ENCODE measurements at regions of chr17 and their contacts with region 1.

Region 1: DNA sequence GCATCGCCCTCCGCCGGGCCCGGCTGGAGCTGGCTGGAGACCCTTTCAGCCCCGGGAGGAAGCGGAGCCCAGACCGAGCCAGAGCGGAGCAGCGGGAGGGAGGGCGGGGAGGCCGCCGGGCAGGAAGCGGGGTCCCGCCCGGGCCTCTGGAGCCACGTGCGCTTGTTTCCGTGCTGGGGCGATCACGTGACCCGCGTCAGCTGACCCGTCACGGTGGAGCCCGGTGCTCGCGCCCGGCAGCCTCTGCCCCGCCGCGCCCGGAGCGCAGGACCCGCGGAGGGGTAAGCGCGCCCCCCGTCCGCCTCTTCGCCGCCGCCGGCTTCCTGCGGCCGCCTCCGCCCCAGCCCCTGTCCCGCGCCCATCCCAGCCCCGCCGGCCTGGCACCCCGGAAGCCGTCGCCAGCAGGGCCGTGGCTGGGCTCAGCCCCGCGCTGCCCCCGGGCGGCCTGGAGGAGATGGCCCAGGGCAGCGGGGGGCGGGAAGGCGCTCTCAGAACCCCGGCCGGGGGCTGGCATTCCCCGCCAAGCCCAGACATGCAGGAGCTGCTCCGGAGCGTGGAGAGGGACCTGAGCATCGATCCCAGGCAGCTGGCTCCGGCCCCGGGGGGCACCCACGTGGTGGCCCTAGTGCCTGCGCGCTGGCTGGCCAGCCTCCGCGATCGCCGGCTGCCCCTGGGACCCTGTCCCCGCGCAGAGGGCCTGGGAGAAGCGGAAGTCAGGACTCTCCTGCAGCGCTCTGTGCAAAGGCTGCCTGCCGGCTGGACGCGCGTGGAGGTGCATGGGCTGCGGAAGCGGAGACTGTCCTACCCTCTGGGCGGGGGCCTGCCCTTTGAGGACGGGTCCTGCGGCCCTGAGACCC is at the start of gene WDR81:
- DNase-seq: peak in 1 of 2 experiments; percentile 90
- H3K4me3 ChIP-seq: peak within 1 kb of the TSS; percentile 39 to 78 (median 45)
- H3K27ac ChIP-seq: no peak within 1 kb of the TSS
- H3K4me1 ChIP-seq: peaks cover 0 to 5% (median 3%) of the 10 kb centered on the region in 4 experiments; a peak in 5 of 7 replicates
- H3K27me3 ChIP-seq: 0 out of 7 replicates have a peak, but pooled peaks cover 0 to 2% (median 0%) of the 10 kb centered on the region in 4 experiments
- CTCF ChIP-seq: no peak
- EP300 ChIP-seq: 0 out of 3 replicates have a peak, but pooled peaks of 1 of the 2 experiments have one; percentile 14
- POLR2A ChIP-seq: no peak
- RAD21 ChIP-seq: no peak; a peak in 1 of 4 replicates
- total RNA-seq, gene WDR81: 12.3 and 13.1 TPM in 2 replicates

Region 2: GRCh38 chr17:1752425-1753262 is 27.9 kb after region 1 on chr17:
- CTCF ChIA-PET with region 1: interaction called, 48 read pairs
- POLR2A ChIA-PET with region 1: interaction called, 4 read pairs
- DNase-seq: no peak
- H3K4me3 ChIP-seq: peak overlapping the region in 1 of 4 experiments; percentile 33; a peak in 1 of 8 replicates
- H3K27ac ChIP-seq: no peak overlapping the region
- H3K4me1 ChIP-seq: peaks cover 0 to 16% (median 11%) of the 10 kb centered on the region in 4 experiments; a peak in 6 of 7 replicates
- H3K27me3 ChIP-seq: no peaks in the 10 kb centered on the region
- CTCF ChIP-seq: no peak
- EP300 ChIP-seq: no peak
- POLR2A ChIP-seq: no peak
- RAD21 ChIP-seq: no peak

Region 3: GRCh38 chr17:1764284-1764683 is 39.5 kb after region 1 on chr17:
- CTCF ChIA-PET with region 1: interaction called, 42 read pairs
- POLR2A ChIA-PET with region 1: interaction called, 8 read pairs
- DNase-seq: no peak
- H3K4me3 ChIP-seq: no peak overlapping the region
- H3K27ac ChIP-seq: no peak overlapping the region
- H3K4me1 ChIP-seq: peaks cover 0 to 25% (median 21%) of the 10 kb centered on the region in 4 experiments; a peak in 6 of 7 replicates
- H3K27me3 ChIP-seq: no peaks in the 10 kb centered on the region; a peak in 2 of 7 replicates
- CTCF ChIP-seq: no peak
- EP300 ChIP-seq: no peak
- POLR2A ChIP-seq: no peak
- RAD21 ChIP-seq: no peak

Region 4: DNA sequence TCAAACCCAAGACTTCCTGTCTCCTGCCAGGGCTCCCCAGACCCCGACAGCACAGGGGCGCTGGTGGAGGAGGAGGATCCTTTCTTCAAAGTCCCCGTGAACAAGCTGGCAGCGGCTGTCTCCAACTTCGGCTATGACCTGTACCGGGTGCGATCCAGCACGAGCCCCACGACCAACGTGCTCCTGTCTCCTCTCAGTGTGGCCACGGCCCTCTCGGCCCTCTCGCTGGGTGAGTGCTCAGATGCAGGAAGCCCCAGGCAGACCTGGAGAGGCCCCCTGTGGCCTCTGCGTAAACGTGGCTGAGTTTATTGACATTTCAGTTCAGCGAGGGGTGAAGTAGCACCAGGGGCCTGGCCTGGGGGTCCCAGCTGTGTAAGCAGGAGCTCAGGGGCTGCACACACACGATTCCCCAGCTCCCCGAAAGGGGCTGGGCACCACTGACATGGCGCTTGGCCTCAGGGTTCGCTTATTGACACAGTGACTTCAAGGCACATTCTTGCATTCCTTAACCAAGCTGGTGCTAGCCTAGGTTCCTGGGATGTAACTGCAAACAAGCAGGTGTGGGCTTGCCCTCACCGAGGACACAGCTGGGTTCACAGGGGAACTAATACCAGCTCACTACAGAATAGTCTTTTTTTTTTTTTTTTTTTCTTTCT is 45.2 kb after region 1 on chr17:
- CTCF ChIA-PET with region 1: interaction called, 42 read pairs
- POLR2A ChIA-PET with region 1: interaction called, 7 read pairs
- DNase-seq: no peak
- H3K4me3 ChIP-seq: no peak overlapping the region
- H3K27ac ChIP-seq: no peak overlapping the region
- H3K4me1 ChIP-seq: peaks cover 0 to 10% (median 6%) of the 10 kb centered on the region in 4 experiments; a peak in 5 of 7 replicates
- H3K27me3 ChIP-seq: no peaks in the 10 kb centered on the region
- CTCF ChIP-seq: no peak
- EP300 ChIP-seq: no peak
- POLR2A ChIP-seq: 0 out of 3 replicates have a peak, but pooled peaks of 1 of the 2 experiments have one; percentile 26
- RAD21 ChIP-seq: no peak

Region 5: DNA sequence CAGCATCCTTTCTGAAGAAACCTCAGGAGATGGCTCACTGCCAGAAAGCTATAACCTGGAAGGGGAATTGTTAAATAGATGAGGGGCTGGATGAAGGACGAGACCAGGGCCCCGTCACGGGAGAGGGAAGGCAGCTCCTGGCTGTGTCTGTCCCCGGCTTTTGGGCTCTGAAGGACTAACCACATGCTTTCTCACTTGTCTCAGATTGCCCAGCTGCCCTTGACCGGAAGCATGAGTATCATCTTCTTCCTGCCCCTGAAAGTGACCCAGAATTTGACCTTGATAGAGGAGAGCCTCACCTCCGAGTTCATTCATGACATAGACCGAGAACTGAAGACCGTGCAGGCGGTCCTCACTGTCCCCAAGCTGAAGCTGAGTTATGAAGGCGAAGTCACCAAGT is 51.6 kb after region 1 on chr17:
- CTCF ChIA-PET with region 1: interaction called, 117 read pairs
- POLR2A ChIA-PET with region 1: interaction called, 4 read pairs
- DNase-seq: no peak
- H3K4me3 ChIP-seq: no peak overlapping the region
- H3K27ac ChIP-seq: no peak overlapping the region
- H3K4me1 ChIP-seq: no peaks in the 10 kb centered on the region
- H3K27me3 ChIP-seq: no peaks in the 10 kb centered on the region
- CTCF ChIP-seq: no peak
- EP300 ChIP-seq: no peak
- POLR2A ChIP-seq: no peak
- RAD21 ChIP-seq: no peak

Region 6: DNA sequence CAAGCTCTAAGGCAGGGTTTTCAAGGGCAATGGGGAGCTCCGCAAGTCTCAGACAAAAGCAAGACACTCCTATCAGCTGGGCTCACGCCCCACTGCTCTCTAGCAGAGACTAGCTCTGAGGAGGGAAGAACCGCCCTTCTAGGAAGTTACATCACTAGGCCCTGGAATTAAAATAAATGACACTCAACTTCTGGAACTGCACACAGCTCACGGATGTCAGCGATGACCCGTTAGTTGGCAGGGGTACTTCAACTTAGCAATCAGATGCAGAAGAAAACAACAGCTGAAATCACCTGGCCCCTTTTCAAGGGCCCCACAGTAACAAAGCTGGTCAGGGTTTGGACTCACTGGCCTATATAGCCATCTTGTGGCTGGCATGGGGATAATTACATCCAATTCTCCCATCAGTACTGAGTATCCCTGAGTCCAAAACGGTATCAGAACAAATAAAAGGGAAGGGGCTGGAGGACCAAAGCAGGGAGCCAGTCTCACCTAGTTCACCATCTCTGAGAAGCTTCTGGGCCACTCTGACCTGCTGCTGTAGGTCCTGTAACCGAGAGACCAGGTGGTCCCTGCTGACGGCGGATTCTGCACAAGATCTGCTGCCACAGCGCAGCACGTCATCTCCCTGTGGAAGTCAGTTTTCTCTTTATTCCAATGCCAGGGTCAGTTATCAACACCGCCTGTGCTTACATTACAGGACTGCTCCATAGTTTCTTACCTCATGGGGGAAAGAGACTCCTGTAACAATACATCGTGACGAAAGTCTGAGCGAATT is 59.3 kb after region 1 on chr17:
- CTCF ChIA-PET with region 1: interaction called, 117 read pairs
- POLR2A ChIA-PET with region 1: interaction called, 11 read pairs
- DNase-seq: no peak
- H3K4me3 ChIP-seq: no peak overlapping the region
- H3K27ac ChIP-seq: no peak overlapping the region
- H3K4me1 ChIP-seq: no peaks in the 10 kb centered on the region
- H3K27me3 ChIP-seq: no peaks in the 10 kb centered on the region
- CTCF ChIP-seq: peak; percentile 9 to 68 (median 59)
- EP300 ChIP-seq: no peak
- POLR2A ChIP-seq: no peak
- RAD21 ChIP-seq: peak; percentile 79 to 83

Region 7: DNA sequence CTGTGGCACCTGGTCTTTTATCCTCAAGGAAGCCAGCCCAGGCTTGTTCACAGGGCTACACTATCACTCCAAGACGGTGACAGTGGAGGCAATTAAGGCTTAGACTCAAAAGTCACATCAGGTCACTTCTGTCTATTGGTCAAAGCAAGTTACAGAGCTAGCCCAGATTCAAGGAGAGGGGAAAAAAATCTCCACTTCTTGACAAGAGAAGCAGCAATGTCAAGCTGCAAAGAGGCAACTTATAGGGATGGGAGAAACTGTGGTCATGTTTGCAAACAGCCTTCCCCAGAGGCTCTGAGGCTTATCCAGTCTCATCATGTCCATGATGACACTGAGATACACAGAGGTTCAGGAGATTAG is 68.7 kb after region 1 on chr17:
- CTCF ChIA-PET with region 1: interaction called, 12 read pairs
- POLR2A ChIA-PET with region 1: no interaction called
- DNase-seq: no peak
- H3K4me3 ChIP-seq: no peak overlapping the region
- H3K27ac ChIP-seq: no peak overlapping the region
- H3K4me1 ChIP-seq: no peaks in the 10 kb centered on the region
- H3K27me3 ChIP-seq: no peaks in the 10 kb centered on the region
- CTCF ChIP-seq: no peak
- EP300 ChIP-seq: no peak
- POLR2A ChIP-seq: no peak
- RAD21 ChIP-seq: no peak